Transverse colon (tissue), 4 donors: ENCODE measurements at regions of chr2 and their contacts with region 1.

Region 1: DNA sequence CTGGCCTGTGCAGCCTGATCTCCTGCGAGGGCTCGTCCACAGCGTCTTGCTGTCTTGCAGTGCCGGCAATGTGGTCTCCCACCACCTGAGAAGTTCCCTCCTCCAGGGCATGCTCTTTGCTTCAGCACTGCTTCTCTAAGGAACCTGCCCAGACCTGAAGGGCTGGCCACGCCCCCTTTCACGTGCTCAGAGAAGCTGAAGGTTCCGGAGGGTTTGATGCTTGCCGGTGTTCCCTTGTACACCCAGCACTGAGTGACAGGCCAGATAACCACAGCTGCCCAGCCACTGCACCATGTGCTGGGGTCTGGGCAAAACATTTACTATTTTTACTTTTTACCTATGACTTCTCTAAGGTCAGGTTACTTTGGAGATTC is 1.7 kb upstream of the POLR2D start:
- DNase-seq: peak; percentile 83
- H3K4me3 ChIP-seq: no peak overlapping the region
- H3K27ac ChIP-seq: no peak overlapping the region
- H3K4me1 ChIP-seq: peaks cover 6 to 28% (median 22%) of the 10 kb centered on the region in 4 donors
- H3K27me3 ChIP-seq: no peaks in the 10 kb centered on the region
- CTCF ChIP-seq: no peak
- EP300 ChIP-seq: no peak
- POLR2A ChIP-seq: no peak

Region 2: GRCh38 chr2:127355386-127356008 is 504.2 kb before region 1 on chr2:
- in situ Hi-C with region 1: no loop called
- intact Hi-C with region 1: no loop called
- DNase-seq: no peak
- H3K4me3 ChIP-seq: no peak overlapping the region
- H3K27ac ChIP-seq: no peak overlapping the region
- H3K4me1 ChIP-seq: peaks cover 3 to 28% (median 4%) of the 10 kb centered on the region in 4 donors
- H3K27me3 ChIP-seq: no peaks in the 10 kb centered on the region
- CTCF ChIP-seq: peak; percentile 45 to 61 (median 56)
- EP300 ChIP-seq: no peak
- POLR2A ChIP-seq: no peak

Region 3: DNA sequence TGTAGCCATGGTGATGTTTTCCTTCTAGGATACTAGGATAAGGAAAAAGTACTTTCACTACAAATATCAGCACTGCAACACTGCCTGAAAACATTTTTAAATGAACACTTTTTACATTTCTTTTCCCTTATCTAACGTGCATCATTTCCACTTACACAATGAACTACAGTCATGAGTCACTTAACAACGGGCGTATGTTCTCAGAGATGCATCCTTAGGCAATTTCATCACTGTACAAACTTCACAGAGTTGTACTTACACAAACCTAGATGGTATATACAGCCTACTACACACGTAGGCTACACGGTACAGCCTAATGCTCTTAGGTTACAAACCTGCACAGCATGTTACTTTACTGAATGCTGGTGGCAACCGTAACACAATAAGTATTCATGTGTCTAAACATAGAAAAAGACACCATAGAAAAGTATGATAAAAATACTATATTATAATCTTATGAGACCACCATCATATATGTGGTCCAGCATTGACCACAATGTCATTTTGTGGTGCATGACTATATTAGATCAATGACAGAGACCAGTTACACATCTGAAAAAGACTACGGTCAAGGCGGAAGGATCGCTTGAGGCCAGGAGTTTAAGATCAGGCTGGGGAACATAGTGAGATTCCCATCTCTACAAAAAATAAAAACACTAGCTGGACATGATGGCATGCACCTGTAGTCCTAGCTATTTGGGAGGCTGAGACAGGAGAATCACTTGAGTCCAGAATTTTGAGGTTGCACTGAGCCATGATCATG is 88.5 kb before region 1 on chr2:
- in situ Hi-C with region 1: no loop called
- intact Hi-C with region 1: no loop called
- DNase-seq: no peak
- H3K4me3 ChIP-seq: no peak overlapping the region
- H3K27ac ChIP-seq: no peak overlapping the region
- H3K4me1 ChIP-seq: peaks cover 0 to 9% (median 0%) of the 10 kb centered on the region in 4 donors
- H3K27me3 ChIP-seq: no peaks in the 10 kb centered on the region
- CTCF ChIP-seq: no peak
- EP300 ChIP-seq: no peak
- POLR2A ChIP-seq: no peak

Region 4: DNA sequence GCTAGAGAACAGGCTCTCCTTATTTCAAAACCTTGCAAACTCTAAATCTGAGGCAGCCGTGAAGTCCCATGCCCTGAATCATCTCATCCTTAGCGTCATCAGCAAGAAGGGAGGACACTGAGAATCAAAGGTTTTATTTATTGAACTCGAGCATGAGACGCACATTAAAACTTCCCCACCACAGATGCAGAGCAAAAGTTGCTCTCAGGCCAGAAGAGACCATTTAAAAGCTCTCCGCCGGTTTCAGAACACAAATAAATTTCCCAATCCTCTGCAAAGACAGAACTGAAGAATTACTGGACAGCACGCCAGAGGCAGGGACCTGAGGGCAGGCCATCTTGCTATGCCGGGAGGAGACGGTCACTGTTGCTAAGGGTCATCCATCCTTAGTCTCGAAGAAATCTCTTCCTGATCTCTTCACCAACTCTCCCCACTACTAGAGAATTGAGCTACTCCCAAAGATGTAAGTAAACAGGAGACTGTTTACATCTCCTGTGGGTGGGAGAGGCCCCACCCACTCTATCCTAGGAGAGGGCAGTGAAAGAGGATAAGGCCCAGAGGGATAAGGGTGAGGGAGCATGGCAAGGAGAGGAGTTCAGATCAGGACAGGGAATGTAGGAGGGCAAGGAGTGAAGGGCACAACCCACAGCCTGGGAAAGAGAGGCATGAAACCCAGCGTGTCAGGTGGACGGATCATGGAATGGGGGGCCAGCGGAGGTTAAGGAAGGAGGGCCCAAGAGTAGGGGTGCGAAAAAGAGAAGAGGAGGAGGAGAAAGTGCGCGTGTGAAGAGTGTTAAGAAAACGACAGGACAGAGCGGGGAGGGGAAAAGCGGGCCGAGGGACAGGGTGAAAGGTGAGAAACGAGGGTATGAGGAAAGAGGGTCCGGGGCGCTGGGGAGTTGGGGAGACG is 25.0 kb after region 1 on chr2:
- in situ Hi-C with region 1: no loop called
- intact Hi-C with region 1: loop called (anchors 1 kb)
- DNase-seq: peak; percentile 14
- H3K4me3 ChIP-seq: peak overlapping the region; percentile 45 to 63 (median 60)
- H3K27ac ChIP-seq: peak overlapping the region; percentile 90 to 95 (median 92)
- H3K4me1 ChIP-seq: peaks cover 19 to 46% (median 24%) of the 10 kb centered on the region in 4 donors
- H3K27me3 ChIP-seq: no peaks in the 10 kb centered on the region
- CTCF ChIP-seq: peak in 1 of 5 experiments; percentile 9
- EP300 ChIP-seq: no peak
- POLR2A ChIP-seq: no peak

Region 5: GRCh38 chr2:127953128-127953718 is 93.5 kb after region 1 on chr2:
- in situ Hi-C with region 1: no loop called
- intact Hi-C with region 1: no loop called
- DNase-seq: peak; percentile 56
- H3K4me3 ChIP-seq: no peak overlapping the region
- H3K27ac ChIP-seq: peak overlapping the region; percentile 57 to 71 (median 66)
- H3K4me1 ChIP-seq: peaks cover 7 to 22% (median 16%) of the 10 kb centered on the region in 4 donors
- H3K27me3 ChIP-seq: no peaks in the 10 kb centered on the region
- CTCF ChIP-seq: no peak
- EP300 ChIP-seq: no peak
- POLR2A ChIP-seq: no peak

Region 6: DNA sequence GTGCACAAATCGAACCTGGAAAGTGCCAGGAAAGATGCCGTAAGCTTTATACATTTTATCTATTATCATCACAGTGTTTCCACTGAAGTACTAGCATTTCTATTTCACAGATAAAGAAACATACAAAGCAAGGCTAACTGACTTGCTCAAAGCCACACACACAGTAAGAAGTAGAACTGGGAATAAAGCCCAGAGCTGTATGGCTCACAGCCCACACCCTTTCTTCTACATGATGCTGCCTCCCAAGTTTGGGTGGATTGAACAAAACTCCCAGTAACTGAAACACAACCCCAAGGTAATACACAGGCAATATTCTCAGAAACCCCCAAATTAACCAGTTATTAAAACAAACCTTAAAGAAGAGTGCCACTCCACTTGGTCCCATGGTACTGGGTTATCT is 156.9 kb after region 1 on chr2:
- in situ Hi-C with region 1: loop called in 1 of 4 experiments (anchors 10 kb)
- intact Hi-C with region 1: no loop called
- DNase-seq: no peak
- H3K4me3 ChIP-seq: no peak overlapping the region
- H3K27ac ChIP-seq: no peak overlapping the region
- H3K4me1 ChIP-seq: no peaks in the 10 kb centered on the region
- H3K27me3 ChIP-seq: no peaks in the 10 kb centered on the region
- CTCF ChIP-seq: no peak
- EP300 ChIP-seq: no peak
- POLR2A ChIP-seq: no peak